ENCODE measurements at regions of chr11 and their contacts with region 1.

Region 1: GRCh38 chr11:94504689-94505293 is 7.5 kb upstream of the C11orf97 start:
- DNase-seq: no peak
- ATAC-seq: peak; percentile 84
- H3K4me3 ChIP-seq: no peak overlapping the region
- H3K27ac ChIP-seq: no peak overlapping the region
- H3K4me1 ChIP-seq: no peaks in the 10 kb centered on the region
- H3K27me3 ChIP-seq: no peaks in the 10 kb centered on the region
- CTCF ChIP-seq: peak; percentile 49 to 69 (median 55); a peak in 5 of 6 replicates
- EP300 ChIP-seq: no peak
- POLR2A ChIP-seq: no peak
- RAD21 ChIP-seq: peak; percentile 85

Region 2: GRCh38 chr11:93921695-93922468 is 582.9 kb before region 1 on chr11:
- CTCF ChIA-PET with region 1: interaction called, 6 read pairs
- POLR2A ChIA-PET with region 1: no interaction called
- RAD21 ChIA-PET with region 1: interaction called, 4 read pairs
- SMC1A ChIA-PET with region 1: interaction called, 7 read pairs
- in situ Hi-C with region 1: no loop called
- intact Hi-C with region 1: loop called (anchors 5 kb)
- DNase-seq: peak; percentile 4
- ATAC-seq: peak; percentile 96
- H3K4me3 ChIP-seq: no peak overlapping the region
- H3K27ac ChIP-seq: no peak overlapping the region
- H3K4me1 ChIP-seq: no peaks in the 10 kb centered on the region
- H3K27me3 ChIP-seq: no peaks in the 10 kb centered on the region; a peak in 2 of 4 replicates
- CTCF ChIP-seq: peak; percentile 58 to 68 (median 65)
- EP300 ChIP-seq: no peak
- POLR2A ChIP-seq: no peak
- RAD21 ChIP-seq: peak; percentile 72

Region 3: GRCh38 chr11:94183886-94184264 is 320.9 kb before region 1 on chr11:
- CTCF ChIA-PET with region 1: interaction called, 57 read pairs
- POLR2A ChIA-PET with region 1: no interaction called
- RAD21 ChIA-PET with region 1: interaction called, 9 read pairs
- SMC1A ChIA-PET with region 1: interaction called, 59 read pairs
- in situ Hi-C with region 1: no loop called
- intact Hi-C with region 1: loop called (anchors 1 kb)
- DNase-seq: peak; percentile 17
- ATAC-seq: peak; percentile 91
- H3K4me3 ChIP-seq: no peak overlapping the region
- H3K27ac ChIP-seq: no peak overlapping the region
- H3K4me1 ChIP-seq: peaks cover 9% of the 10 kb centered on the region
- H3K27me3 ChIP-seq: no peaks in the 10 kb centered on the region
- CTCF ChIP-seq: peak; percentile 77 to 90 (median 86)
- EP300 ChIP-seq: no peak
- POLR2A ChIP-seq: no peak
- RAD21 ChIP-seq: peak; percentile 87

Region 4: GRCh38 chr11:94417386-94417987 is 87.3 kb before region 1 on chr11:
- CTCF ChIA-PET with region 1: interaction called, 5 read pairs
- POLR2A ChIA-PET with region 1: no interaction called
- RAD21 ChIA-PET with region 1: interaction called, 5 read pairs
- SMC1A ChIA-PET with region 1: interaction called, 7 read pairs
- in situ Hi-C with region 1: no loop called
- intact Hi-C with region 1: loop called (anchors 2 kb)
- DNase-seq: no peak
- ATAC-seq: peak; percentile 54
- H3K4me3 ChIP-seq: no peak overlapping the region
- H3K27ac ChIP-seq: no peak overlapping the region
- H3K4me1 ChIP-seq: no peaks in the 10 kb centered on the region
- H3K27me3 ChIP-seq: no peaks in the 10 kb centered on the region
- CTCF ChIP-seq: peak in 2 of 3 experiments; percentile 24 to 25; a peak in 3 of 6 replicates
- EP300 ChIP-seq: no peak
- POLR2A ChIP-seq: no peak
- RAD21 ChIP-seq: peak; percentile 74

Region 5: GRCh38 chr11:94593030-94593429 is 88.2 kb after region 1 on chr11:
- CTCF ChIA-PET with region 1: interaction called, 10 read pairs
- POLR2A ChIA-PET with region 1: no interaction called
- RAD21 ChIA-PET with region 1: interaction called, 8 read pairs
- SMC1A ChIA-PET with region 1: interaction called, 6 read pairs
- in situ Hi-C with region 1: no loop called
- intact Hi-C with region 1: no loop called
- DNase-seq: no peak
- ATAC-seq: peak; percentile 82
- H3K4me3 ChIP-seq: no peak overlapping the region
- H3K27ac ChIP-seq: no peak overlapping the region
- H3K4me1 ChIP-seq: no peaks in the 10 kb centered on the region
- H3K27me3 ChIP-seq: no peaks in the 10 kb centered on the region
- CTCF ChIP-seq: no peak
- EP300 ChIP-seq: peak in 1 of 2 experiments; percentile 41; a peak in 1 of 4 replicates
- POLR2A ChIP-seq: no peak
- RAD21 ChIP-seq: no peak

Measured in GM12878 (cell line).